B cell (primary cell): ENCODE measurements at regions of chr1 and their contacts with region 1.

Region 1: GRCh38 chr1:30779294-30780071 is 21.9 kb upstream of the LAPTM5 start:
- DNase-seq: peak; percentile 92
- ATAC-seq: peak; percentile 76
- H3K4me3 ChIP-seq: no peak overlapping the region
- H3K4me3 Mint-ChIP-seq: peak overlapping the region; percentile 53
- H3K27ac ChIP-seq: peak overlapping the region in 1 of 2 donors; percentile 59
- H3K27ac Mint-ChIP-seq: peak overlapping the region; percentile 84
- H3K4me1 ChIP-seq: peaks cover 43 to 56% of the 10 kb centered on the region in 2 donors
- H3K4me1 Mint-ChIP-seq: peaks cover 42% of the 10 kb centered on the region
- H3K27me3 ChIP-seq: peaks cover 0 to 7% (median 0%) of the 10 kb centered on the region in 4 experiments
- H3K27me3 Mint-ChIP-seq: no peaks in the 10 kb centered on the region
- CTCF ChIP-seq: peak; percentile 93

Region 2: DNA sequence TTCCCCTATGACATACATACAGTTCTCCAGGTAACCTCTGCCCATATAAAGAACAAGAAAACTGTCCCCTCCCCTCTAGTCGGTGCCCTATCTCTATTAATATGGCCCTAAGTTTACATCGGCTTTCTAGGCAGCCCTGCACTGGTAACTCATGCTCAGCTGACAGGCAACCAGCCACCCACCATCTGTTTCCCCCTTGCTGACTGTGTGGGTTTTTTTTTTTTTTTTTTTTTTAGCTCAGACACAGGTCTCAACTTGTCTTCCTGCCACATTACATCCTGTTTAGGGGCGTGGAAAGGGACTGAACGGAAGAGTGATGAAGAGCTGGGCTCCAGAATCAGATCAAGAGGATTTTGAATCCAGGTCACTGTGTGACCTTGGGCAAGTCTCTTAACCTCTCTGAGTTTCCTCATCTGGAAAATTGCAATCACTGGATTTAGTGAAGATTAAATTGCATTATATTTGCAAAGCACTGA is 35.9 kb before region 1 on chr1:
- CTCF ChIA-PET with region 1: interaction called, 312 read pairs
- POLR2A ChIA-PET with region 1: interaction called, 10 read pairs
- intact Hi-C with region 1: loop called (anchors 5 kb)
- DNase-seq: peak; percentile 88
- ATAC-seq: peak; percentile 79
- H3K4me3 ChIP-seq: peak overlapping the region in 4 of 5 experiments; percentile 16 to 62 (median 28)
- H3K4me3 Mint-ChIP-seq: peak overlapping the region; percentile 78
- H3K27ac ChIP-seq: peak overlapping the region; percentile 98 to 100
- H3K27ac Mint-ChIP-seq: peak overlapping the region; percentile 87
- H3K4me1 ChIP-seq: peaks cover 84 to 99% of the 10 kb centered on the region in 2 donors
- H3K4me1 Mint-ChIP-seq: peaks cover 99% of the 10 kb centered on the region
- H3K27me3 ChIP-seq: no peaks in the 10 kb centered on the region
- H3K27me3 Mint-ChIP-seq: no peaks in the 10 kb centered on the region
- CTCF ChIP-seq: no peak

Region 3: GRCh38 chr1:30756545-30757195 is 22.8 kb before region 1 on chr1:
- CTCF ChIA-PET with region 1: interaction called, 312 read pairs
- POLR2A ChIA-PET with region 1: interaction called, 26 read pairs
- intact Hi-C with region 1: loop called (anchors 1 kb)
- DNase-seq: peak; percentile 87
- ATAC-seq: peak; percentile 19
- H3K4me3 ChIP-seq: peak overlapping the region; percentile 80 to 97 (median 95)
- H3K4me3 Mint-ChIP-seq: peak overlapping the region; percentile 92
- H3K27ac ChIP-seq: peak overlapping the region; percentile 98 to 100
- H3K27ac Mint-ChIP-seq: peak overlapping the region; percentile 92
- H3K4me1 ChIP-seq: peaks cover 62 to 87% of the 10 kb centered on the region in 2 donors
- H3K4me1 Mint-ChIP-seq: peaks cover 78% of the 10 kb centered on the region
- H3K27me3 ChIP-seq: no peaks in the 10 kb centered on the region
- H3K27me3 Mint-ChIP-seq: no peaks in the 10 kb centered on the region
- CTCF ChIP-seq: no peak

Region 4: DNA sequence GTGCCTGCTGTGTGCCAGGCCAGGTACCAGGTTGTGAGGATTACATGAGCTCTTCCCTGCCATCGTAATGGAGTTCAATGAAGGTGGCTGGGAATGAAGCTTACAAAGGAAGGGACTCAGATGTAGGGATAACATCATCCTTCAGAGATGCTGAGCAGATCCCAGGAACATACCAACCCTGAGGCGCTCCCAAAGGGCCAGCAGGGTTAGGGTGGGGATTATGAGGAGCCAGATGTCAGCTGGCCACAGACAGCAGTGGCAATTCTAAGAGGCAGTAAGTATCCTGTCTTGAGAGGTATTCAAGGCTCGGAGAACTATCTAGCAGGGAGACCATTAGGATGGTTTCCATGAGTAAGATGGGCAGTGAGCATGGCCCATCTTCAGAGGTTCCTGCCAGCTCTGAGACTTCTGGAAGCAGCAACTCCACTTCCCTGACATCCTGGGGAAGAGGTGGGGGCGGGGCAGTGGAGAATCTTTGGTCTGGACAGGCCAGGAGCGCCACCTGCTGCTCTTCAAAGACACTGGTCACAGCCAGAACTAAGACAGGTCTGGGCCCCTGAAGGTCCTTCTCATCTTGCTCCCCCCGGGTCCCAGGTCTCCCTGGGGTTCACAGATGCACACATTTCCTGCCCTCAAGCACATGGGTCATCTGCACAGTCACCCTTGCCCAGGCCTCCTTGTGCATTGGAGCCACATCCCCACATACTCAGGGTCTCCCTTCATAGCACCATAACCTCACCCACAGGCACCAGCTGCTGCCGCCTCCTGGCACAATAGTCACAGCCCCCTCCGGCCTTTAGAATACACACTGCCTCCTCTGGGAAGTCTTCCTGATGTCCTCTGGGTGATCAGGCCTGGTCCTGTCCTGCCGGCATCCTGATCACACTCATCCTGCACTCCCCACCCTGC is 131.8 kb after region 1 on chr1:
- CTCF ChIA-PET with region 1: interaction called, 147 read pairs
- POLR2A ChIA-PET with region 1: no interaction called
- intact Hi-C with region 1: loop called (anchors 1 kb)
- DNase-seq: peak; percentile 74
- ATAC-seq: peak; percentile 57
- H3K4me3 ChIP-seq: no peak overlapping the region
- H3K4me3 Mint-ChIP-seq: no peak overlapping the region
- H3K27ac ChIP-seq: no peak overlapping the region
- H3K27ac Mint-ChIP-seq: no peak overlapping the region
- H3K4me1 ChIP-seq: peaks cover 30 to 31% of the 10 kb centered on the region in 2 donors
- H3K4me1 Mint-ChIP-seq: peaks cover 29% of the 10 kb centered on the region
- H3K27me3 ChIP-seq: peaks cover 0 to 40% (median 18%) of the 10 kb centered on the region in 4 experiments
- H3K27me3 Mint-ChIP-seq: peaks cover 32% of the 10 kb centered on the region
- CTCF ChIP-seq: peak; percentile 72

Region 5: DNA sequence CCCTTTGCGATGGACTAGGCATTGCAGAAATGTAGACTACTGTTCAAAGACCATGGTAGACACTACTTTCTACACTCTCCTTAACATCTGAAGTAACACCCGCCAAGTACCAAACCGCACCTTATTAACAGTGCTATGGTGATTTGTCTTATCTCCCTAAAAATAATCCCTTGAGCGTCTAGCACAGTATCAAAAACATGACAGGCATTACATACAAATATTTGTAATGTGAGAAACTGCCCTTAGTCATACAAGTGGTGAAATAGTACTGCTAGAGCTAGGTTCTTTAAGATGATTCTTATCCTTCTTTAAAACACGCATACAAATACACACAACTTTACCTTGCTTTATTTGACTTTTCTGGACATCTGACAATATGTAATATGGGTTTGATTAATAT is 258.9 kb after region 1 on chr1:
- CTCF ChIA-PET with region 1: no interaction called
- POLR2A ChIA-PET with region 1: no interaction called
- intact Hi-C with region 1: no loop called
- DNase-seq: no peak
- ATAC-seq: no peak
- H3K4me3 ChIP-seq: no peak overlapping the region
- H3K4me3 Mint-ChIP-seq: no peak overlapping the region
- H3K27ac ChIP-seq: peak overlapping the region in 1 of 2 donors; percentile 15
- H3K27ac Mint-ChIP-seq: no peak overlapping the region
- H3K4me1 ChIP-seq: peaks cover 12 to 17% of the 10 kb centered on the region in 2 donors
- H3K4me1 Mint-ChIP-seq: peaks cover 61% of the 10 kb centered on the region
- H3K27me3 ChIP-seq: no peaks in the 10 kb centered on the region
- H3K27me3 Mint-ChIP-seq: no peaks in the 10 kb centered on the region
- CTCF ChIP-seq: no peak

Region 6: GRCh38 chr1:31651089-31651420 is 871.6 kb after region 1 on chr1:
- CTCF ChIA-PET with region 1: no interaction called
- POLR2A ChIA-PET with region 1: no interaction called
- intact Hi-C with region 1: no loop called
- DNase-seq: no peak
- ATAC-seq: no peak
- H3K4me3 ChIP-seq: no peak overlapping the region
- H3K4me3 Mint-ChIP-seq: no peak overlapping the region
- H3K27ac ChIP-seq: no peak overlapping the region
- H3K27ac Mint-ChIP-seq: no peak overlapping the region
- H3K4me1 ChIP-seq: no peaks in the 10 kb centered on the region
- H3K4me1 Mint-ChIP-seq: peaks cover 7% of the 10 kb centered on the region
- H3K27me3 ChIP-seq: peaks cover 0 to under 1% (median 0%) of the 10 kb centered on the region in 4 experiments
- H3K27me3 Mint-ChIP-seq: peaks cover 7% of the 10 kb centered on the region
- CTCF ChIP-seq: no peak